Posterior vena cava (tissue), 2 donors: ENCODE measurements at regions of chr9 and their contacts with region 1.

Region 1: DNA sequence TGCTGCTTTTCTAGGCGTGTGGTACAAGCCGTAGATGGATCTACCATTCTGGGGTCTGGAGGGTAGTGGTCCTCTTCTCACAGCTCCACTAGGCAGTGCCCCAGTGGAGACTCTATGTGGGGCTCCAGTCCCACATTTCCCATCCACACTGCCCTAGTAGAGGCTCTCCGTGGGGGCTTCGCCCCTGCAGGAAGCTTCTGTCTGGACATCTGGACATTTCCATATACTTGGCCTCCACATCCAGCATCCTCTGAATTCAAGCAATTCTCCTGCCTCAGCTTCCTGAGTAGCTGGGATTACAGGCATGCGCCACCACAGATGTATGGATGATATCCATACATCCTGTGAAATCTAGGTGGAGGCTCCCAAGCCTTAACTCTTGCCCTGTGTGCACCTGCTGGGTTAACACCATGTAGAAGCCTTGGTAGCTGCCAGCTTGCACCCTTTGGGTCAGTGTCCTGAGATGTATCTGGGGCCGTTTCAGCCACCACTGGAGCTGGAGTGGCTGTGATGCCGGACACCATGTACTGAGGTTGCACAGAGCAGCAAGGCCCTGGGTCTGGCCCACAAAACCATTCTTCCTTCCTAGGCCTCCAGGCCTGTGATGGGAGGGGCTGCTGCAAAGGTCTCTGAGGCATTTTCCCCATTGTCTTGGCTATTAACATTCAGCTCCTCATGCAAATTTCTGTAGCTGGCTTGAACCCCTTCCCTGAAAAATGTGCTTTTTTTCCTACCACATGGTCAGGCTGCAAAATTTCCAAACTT is 84.0 kb downstream of the EHMT1 start:
- DNase-seq: peak; percentile 28

Region 2: GRCh38 chr9:137680444-137681358 is 22.1 kb before region 1 on chr9:
- intact Hi-C with region 1: loop called in 1 of 2 experiments (anchors 1 kb)
- DNase-seq: peak; percentile 56